ENCODE measurements at regions of chr13 and their contacts with region 1.

Region 1: GRCh38 chr13:30659980-30660379 is 42.3 kb downstream of the USPL1 start:
- DNase-seq: no peak
- ATAC-seq: no peak
- H3K4me3 ChIP-seq: no peak overlapping the region
- H3K27ac ChIP-seq: no peak overlapping the region
- H3K4me1 ChIP-seq: peaks cover 11% of the 10 kb centered on the region
- H3K27me3 ChIP-seq: no peaks in the 10 kb centered on the region
- CTCF ChIP-seq: no peak
- EP300 ChIP-seq: no peak
- POLR2A ChIP-seq: no peak; the same call in 1 of the 2 replicates
- RAD21 ChIP-seq: no peak

Region 2: DNA sequence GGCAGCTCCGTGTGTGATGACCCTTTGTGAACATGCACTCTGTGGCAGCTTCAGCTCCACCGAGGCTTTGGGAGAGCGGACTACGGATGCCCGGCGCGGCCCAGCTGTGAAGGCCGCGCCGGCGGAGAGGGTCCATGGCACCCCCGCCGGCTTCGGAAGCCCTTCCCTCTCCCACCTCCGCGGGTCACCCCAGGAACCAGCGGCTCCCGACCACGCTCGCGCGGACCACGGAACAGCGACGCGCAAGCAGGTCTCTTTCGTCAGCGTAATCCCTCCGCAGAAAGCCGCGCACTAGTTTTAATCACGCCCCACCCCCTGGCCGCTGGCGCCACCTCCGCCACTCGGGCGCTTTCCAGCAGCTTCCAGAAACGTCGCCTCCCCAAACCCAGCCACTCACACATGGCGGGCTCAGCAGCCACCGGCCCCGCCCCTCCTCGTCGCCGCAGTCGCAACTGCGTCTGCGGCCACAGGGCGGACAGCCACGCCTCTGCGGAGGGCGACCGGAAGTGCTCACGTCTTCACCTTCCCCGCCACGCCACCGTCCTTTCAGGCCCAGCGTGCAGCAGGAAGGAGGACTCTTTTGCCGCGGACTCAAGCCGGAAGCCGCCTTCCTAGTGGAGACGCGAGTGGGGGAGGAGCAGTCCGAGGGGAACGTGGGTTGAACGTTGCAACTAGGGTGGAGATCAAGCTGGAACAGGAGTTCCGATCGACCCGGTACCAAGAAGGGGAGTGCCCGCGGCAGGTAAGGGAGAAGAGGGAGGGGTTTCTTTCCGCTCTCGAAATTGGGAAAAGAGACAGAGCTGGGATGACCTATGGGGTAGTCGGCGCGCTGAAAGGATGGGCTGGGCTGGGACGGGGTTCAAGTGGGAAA is 42.4 kb before region 1 on chr13 and contains the start of gene USPL1:
- CTCF ChIA-PET with region 1: interaction called, 3 read pairs
- POLR2A ChIA-PET with region 1: interaction called, 4 read pairs
- RAD21 ChIA-PET with region 1: interaction called, 7 read pairs
- SMC1A ChIA-PET with region 1: interaction called, 10 read pairs
- in situ Hi-C with region 1: no loop called
- intact Hi-C with region 1: no loop called
- DNase-seq: peak; percentile 96
- ATAC-seq: peak; percentile 91
- H3K4me3 ChIP-seq: peak within 1 kb of the TSS; percentile 91
- H3K27ac ChIP-seq: peak within 1 kb of the TSS; percentile 93
- H3K4me1 ChIP-seq: peaks cover 8% of the 10 kb centered on the region
- H3K27me3 ChIP-seq: no peaks in the 10 kb centered on the region
- CTCF ChIP-seq: peak in 1 of 3 experiments; percentile 6; a peak in 1 of 6 replicates
- EP300 ChIP-seq: peak; percentile 84 to 95
- POLR2A ChIP-seq: peak; percentile 93
- RAD21 ChIP-seq: peak; percentile 17; the same call in 1 of the 2 replicates
- polyA plus RNA-seq, gene USPL1: 7.9 to 8.0 TPM